ENCODE measurements at regions of chr3 and their contacts with region 1.

Region 1: DNA sequence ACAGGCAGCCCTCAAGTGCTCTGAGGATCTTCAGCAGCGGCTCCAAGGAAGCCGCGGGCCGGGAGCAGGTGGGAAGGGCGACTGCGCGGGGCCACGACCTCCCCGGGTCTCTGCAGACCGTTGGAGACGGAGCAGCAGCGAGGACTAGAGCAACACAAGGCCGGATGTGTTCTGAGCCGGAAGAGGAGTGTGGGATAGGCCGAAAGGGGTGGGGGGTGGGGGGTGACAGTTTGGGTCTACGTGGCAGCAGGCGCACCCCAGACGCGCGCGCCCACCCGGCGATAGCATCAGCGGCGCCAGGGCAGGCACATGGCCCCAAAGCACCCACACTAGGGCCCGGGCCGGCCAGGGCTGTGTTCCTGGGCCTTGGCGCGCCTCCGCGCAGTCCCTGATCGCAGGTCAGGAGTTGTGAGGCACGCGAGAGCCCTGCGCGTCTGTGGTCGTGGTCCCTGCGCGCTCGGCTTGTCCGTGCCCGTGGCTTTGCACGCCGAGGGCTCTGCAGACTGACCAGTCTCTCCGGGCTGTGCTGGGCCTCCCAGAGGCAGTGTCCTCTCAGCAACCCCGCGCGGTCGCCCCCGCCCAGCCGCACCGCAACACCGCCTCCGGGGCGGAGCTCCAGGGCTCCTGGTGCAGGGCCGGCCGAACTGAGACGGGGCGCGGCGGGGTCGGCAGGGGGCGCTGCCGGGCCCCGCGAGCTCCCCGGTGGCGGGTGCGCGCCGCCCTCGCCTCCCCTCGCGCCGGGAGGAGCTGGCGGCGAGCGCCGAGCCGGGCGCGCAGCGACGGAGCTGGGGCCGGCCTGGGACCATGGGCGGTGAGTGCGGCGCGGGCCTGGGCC is at the start of gene PXYLP1:
- DNase-seq: peak; percentile 95
- H3K4me3 Mint-ChIP-seq: peak within 1 kb of the TSS; percentile 85
- H3K27ac Mint-ChIP-seq: peak within 1 kb of the TSS; percentile 87
- H3K4me1 Mint-ChIP-seq: peaks cover 25% of the 10 kb centered on the region
- H3K27me3 Mint-ChIP-seq: no peaks in the 10 kb centered on the region
- total RNA-seq, gene PXYLP1: 9.0 to 11.6 TPM

Region 2: GRCh38 chr3:141011232-141011996 is 219.9 kb before region 1 on chr3:
- CTCF ChIA-PET with region 1: interaction called, 3 read pairs
- POLR2A ChIA-PET with region 1: no interaction called
- intact Hi-C with region 1: loop called (anchors 1 kb)
- DNase-seq: peak; percentile 87
- H3K4me3 Mint-ChIP-seq: no peak overlapping the region
- H3K27ac Mint-ChIP-seq: no peak overlapping the region
- H3K4me1 Mint-ChIP-seq: peaks cover 3% of the 10 kb centered on the region
- H3K27me3 Mint-ChIP-seq: peaks cover 17% of the 10 kb centered on the region

Region 3: GRCh38 chr3:141151439-141151838 is 79.9 kb before region 1 on chr3:
- CTCF ChIA-PET with region 1: no interaction called
- POLR2A ChIA-PET with region 1: no interaction called
- intact Hi-C with region 1: no loop called
- DNase-seq: no peak
- H3K4me3 Mint-ChIP-seq: no peak overlapping the region
- H3K27ac Mint-ChIP-seq: no peak overlapping the region
- H3K4me1 Mint-ChIP-seq: no peaks in the 10 kb centered on the region
- H3K27me3 Mint-ChIP-seq: peaks cover 6% of the 10 kb centered on the region

Region 4: GRCh38 chr3:141250342-141250741 is 19.0 kb after region 1 on chr3:
- CTCF ChIA-PET with region 1: interaction called, 42 read pairs
- POLR2A ChIA-PET with region 1: interaction called, 21 read pairs
- intact Hi-C with region 1: no loop called
- DNase-seq: no peak
- H3K4me3 Mint-ChIP-seq: no peak overlapping the region
- H3K27ac Mint-ChIP-seq: no peak overlapping the region
- H3K4me1 Mint-ChIP-seq: no peaks in the 10 kb centered on the region
- H3K27me3 Mint-ChIP-seq: no peaks in the 10 kb centered on the region

Region 5: DNA sequence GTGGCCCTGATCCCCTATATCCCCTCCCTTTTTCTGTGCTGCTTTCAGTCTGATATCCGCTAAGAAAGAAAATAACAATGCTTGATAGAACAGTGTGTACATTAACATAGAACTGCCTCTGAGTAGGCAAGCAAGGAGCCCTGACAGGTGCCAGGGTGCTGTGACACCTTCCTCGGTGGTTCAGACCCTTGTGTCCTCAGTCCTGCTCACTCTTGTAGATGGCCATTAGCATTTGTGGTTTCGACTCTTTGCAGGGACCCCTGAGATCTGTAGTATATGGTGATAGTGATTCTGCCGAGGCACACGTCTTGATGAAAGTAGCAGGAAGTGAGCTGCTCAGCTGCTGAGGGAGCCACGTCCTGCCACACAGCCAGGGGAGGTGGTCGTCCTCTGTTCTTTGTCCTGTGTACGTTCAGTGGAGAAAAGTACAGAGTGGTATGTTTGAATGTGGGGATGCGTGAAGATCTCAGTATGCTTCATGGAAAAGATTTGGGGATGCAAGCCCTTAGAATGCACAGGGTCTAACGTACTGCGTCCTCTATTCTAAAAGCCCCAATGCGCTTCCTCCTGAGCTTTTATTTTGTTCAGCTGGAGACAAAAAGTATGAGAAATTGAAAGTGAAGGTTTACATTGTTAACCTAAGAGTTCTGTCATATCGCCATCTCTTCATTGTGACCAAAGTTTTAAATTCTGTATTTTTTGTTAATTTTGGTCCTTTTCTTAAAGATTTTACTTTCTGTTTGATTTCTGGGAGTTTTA is 35.7 kb after region 1 on chr3:
- CTCF ChIA-PET with region 1: interaction called, 38 read pairs
- POLR2A ChIA-PET with region 1: interaction called, 18 read pairs
- intact Hi-C with region 1: no loop called
- DNase-seq: peak; percentile 56
- H3K4me3 Mint-ChIP-seq: peak overlapping the region; percentile 75
- H3K27ac Mint-ChIP-seq: peak overlapping the region; percentile 86
- H3K4me1 Mint-ChIP-seq: peaks cover 31% of the 10 kb centered on the region
- H3K27me3 Mint-ChIP-seq: no peaks in the 10 kb centered on the region

Region 6: DNA sequence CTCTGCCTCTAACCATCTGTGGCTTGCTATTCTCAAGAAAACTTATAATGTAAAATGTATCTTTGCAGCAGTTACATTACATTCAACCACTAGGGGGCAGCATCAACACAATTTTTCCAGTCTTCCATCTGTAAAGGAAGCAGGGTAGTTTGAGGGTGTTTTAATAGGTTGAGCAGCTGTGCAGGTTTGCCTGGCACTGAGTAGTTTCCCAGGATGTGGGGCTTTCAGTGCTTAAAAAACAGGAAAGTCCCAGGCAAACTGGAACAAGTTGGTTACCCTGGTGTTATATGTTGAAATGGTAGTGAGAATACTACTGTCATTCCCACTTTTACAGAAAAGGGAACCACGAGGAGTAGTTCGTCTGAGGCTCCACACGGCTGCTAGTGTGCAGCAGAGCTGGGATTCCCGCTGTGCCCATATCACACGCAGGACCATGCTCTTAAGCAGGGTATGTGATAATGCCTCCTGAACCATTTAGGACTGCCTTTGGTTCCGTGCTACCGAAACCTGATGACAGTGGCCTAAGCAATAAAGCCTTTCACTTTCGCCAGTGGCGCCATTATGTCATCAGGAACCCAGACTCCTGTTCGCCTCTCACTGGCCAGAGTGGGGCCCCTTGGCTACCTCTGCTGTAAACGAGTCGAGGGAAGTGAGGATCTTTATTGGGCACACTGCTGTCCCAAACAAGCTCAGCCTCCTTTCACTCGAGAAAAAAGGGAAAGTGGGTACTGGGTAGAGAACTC is 72.3 kb after region 1 on chr3:
- CTCF ChIA-PET with region 1: interaction called, 17 read pairs
- POLR2A ChIA-PET with region 1: interaction called, 14 read pairs
- intact Hi-C with region 1: no loop called
- DNase-seq: peak; percentile 56
- H3K4me3 Mint-ChIP-seq: no peak overlapping the region
- H3K27ac Mint-ChIP-seq: no peak overlapping the region
- H3K4me1 Mint-ChIP-seq: peaks cover 44% of the 10 kb centered on the region
- H3K27me3 Mint-ChIP-seq: no peaks in the 10 kb centered on the region